Sigmoid colon (tissue), 7 donors: ENCODE measurements at regions of chr1 and their contacts with region 1.

Region 1: GRCh38 chr1:229117664-229118300 is 153.1 kb upstream of the RAB4A start:
- DNase-seq: peak; percentile 94
- H3K4me3 ChIP-seq: no peak overlapping the region
- H3K27ac ChIP-seq: peak overlapping the region; percentile 78 to 86 (median 83)
- H3K4me1 ChIP-seq: peaks cover 0 to 79% (median 44%) of the 10 kb centered on the region in 4 donors
- H3K27me3 ChIP-seq: no peaks in the 10 kb centered on the region
- CTCF ChIP-seq: no peak
- EP300 ChIP-seq: peak in 2 of 4 donors; percentile 60 to 70
- POLR2A ChIP-seq: no peak

Region 2: DNA sequence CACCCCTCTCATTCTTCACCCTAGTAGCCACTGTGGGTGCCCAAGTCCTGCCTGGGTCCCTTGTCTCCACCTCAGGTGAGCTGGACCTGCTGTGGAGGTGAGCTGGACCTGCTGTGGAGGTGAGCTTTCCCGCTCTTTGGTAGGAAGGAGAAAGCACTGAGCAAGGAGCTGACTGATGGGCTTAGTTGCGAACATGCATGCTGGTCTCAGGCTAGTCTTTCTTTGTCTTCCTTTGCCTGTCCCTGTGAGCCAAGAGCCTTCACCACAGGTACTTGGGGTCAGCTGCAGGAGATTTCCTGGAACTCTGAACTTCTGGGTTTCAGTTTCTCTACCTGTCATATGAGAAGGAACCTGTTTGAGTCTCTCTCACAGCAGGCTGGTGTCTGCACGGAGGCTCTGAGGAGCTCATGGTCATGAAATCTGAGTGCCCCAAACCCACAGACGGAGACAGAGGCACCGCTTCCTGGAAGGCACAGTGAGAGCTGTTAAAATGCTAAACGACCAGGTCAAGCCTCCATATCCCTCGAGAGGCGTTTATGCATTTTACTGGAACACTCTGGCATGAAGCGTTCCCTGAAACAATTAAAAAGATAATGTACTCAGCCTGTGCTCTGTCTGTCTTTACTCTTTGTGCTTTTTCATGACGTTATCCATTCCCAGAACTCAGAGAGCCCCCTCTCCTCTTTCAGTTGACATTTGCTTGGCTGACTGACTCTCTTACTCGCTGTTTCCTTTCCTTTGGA is 312.9 kb before region 1 on chr1:
- intact Hi-C with region 1: loop called (anchors 2 kb)
- DNase-seq: no peak
- H3K4me3 ChIP-seq: no peak overlapping the region
- H3K27ac ChIP-seq: peak overlapping the region in 3 of 4 donors; percentile 15 to 83 (median 47)
- H3K4me1 ChIP-seq: peaks cover 0 to 54% (median 45%) of the 10 kb centered on the region in 4 donors
- H3K27me3 ChIP-seq: no peaks in the 10 kb centered on the region
- CTCF ChIP-seq: no peak
- EP300 ChIP-seq: peak in 2 of 4 donors; percentile 73 to 82
- POLR2A ChIP-seq: no peak

Region 3: DNA sequence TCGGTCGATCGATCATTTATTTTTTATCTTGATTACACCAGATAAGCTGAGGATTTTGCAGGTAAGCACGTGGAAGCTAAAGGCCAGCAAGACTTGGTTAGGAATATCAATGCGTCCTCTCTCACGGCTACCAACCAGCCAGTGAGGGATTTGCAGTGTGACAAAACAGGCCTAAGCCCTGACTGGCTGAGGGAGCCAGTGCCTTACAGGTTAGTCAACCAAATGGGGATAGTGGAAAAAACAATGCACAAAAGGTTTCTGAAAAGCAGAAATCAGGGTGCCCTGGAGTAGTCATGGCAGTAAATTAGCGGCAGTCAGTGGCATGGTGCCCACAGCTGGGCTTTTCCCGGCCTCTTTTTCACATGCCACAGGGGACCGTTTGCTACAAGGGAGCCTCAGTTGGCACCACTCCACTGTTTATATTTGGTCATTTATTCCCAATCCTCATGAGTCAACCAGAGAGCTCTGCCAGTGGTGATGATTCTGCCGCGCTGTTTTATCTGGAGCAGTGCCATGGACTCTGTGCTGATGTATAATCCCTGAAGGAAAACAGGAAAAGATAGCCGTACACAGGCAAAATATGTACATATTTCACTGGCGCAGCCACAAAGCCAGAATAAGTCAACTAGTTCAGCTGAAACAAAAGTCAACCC is 214.9 kb before region 1 on chr1:
- intact Hi-C with region 1: loop called (anchors 5 kb)
- DNase-seq: peak; percentile 95
- H3K4me3 ChIP-seq: no peak overlapping the region
- H3K27ac ChIP-seq: peak overlapping the region; percentile 42 to 81 (median 69)
- H3K4me1 ChIP-seq: peaks cover 0 to 46% (median 43%) of the 10 kb centered on the region in 4 donors
- H3K27me3 ChIP-seq: no peaks in the 10 kb centered on the region
- CTCF ChIP-seq: no peak
- EP300 ChIP-seq: no peak
- POLR2A ChIP-seq: no peak

Region 4: GRCh38 chr1:228989992-228990827 is 127.6 kb before region 1 on chr1:
- intact Hi-C with region 1: loop called (anchors 5 kb)
- DNase-seq: peak; percentile 93
- H3K4me3 ChIP-seq: no peak overlapping the region
- H3K27ac ChIP-seq: peak overlapping the region; percentile 15 to 82 (median 70)
- H3K4me1 ChIP-seq: peaks cover 0 to 53% (median 44%) of the 10 kb centered on the region in 4 donors
- H3K27me3 ChIP-seq: no peaks in the 10 kb centered on the region
- CTCF ChIP-seq: no peak
- EP300 ChIP-seq: peak in 3 of 4 donors; percentile 31 to 78 (median 40)
- POLR2A ChIP-seq: no peak

Region 5: DNA sequence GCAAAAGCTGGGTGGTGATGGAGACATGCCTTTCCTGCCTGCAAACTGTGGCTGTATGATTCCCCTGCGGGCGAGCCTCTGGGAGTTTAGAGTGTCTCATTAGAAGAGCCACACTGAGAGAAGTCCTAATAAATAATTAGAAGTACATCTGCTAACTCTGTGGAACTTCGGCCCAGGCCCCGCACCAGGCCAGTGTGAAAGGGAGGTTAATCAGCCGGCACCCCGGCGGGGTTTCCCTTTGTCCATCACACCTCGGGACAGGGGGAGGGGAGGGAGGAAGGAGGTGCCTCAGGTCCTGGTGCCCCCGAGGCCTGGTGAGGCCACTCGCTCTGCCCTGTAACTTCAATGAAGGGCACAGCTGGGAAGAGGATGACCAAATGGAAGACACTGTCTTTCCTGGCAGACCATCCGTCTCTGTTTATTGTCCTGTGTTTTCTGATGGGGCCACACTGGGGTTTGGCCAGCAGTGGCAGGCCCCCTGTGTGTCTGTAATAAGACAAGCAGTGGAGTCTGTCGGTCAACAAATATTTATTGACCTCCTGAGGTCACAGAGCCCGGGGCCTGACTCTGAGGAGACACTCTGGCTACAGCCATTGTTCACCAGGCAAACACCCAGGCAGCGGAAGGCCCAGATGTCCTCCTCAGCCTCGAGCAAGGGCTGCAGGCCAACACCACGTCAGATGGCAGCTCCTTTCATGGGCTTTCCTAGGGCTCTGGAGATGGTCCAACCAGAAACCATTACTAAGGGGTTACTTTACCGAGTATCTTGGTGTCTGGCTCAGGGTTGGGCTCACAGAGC is 114.3 kb before region 1 on chr1:
- intact Hi-C with region 1: loop called (anchors 5 kb)
- DNase-seq: peak; percentile 92
- H3K4me3 ChIP-seq: no peak overlapping the region
- H3K27ac ChIP-seq: peak overlapping the region in 3 of 4 donors; percentile 57 to 70 (median 61)
- H3K4me1 ChIP-seq: peaks cover 0 to 16% (median 10%) of the 10 kb centered on the region in 4 donors
- H3K27me3 ChIP-seq: no peaks in the 10 kb centered on the region
- CTCF ChIP-seq: no peak
- EP300 ChIP-seq: no peak
- POLR2A ChIP-seq: no peak

Region 6: GRCh38 chr1:229070168-229070567 is 47.6 kb before region 1 on chr1:
- intact Hi-C with region 1: loop called (anchors 1 kb)
- DNase-seq: peak; percentile 98
- H3K4me3 ChIP-seq: no peak overlapping the region
- H3K27ac ChIP-seq: peak overlapping the region; percentile 15 to 75 (median 65)
- H3K4me1 ChIP-seq: peaks cover 0 to 22% (median 17%) of the 10 kb centered on the region in 4 donors
- H3K27me3 ChIP-seq: no peaks in the 10 kb centered on the region
- CTCF ChIP-seq: no peak
- EP300 ChIP-seq: peak; percentile 36 to 88 (median 76)
- POLR2A ChIP-seq: no peak

Region 7: DNA sequence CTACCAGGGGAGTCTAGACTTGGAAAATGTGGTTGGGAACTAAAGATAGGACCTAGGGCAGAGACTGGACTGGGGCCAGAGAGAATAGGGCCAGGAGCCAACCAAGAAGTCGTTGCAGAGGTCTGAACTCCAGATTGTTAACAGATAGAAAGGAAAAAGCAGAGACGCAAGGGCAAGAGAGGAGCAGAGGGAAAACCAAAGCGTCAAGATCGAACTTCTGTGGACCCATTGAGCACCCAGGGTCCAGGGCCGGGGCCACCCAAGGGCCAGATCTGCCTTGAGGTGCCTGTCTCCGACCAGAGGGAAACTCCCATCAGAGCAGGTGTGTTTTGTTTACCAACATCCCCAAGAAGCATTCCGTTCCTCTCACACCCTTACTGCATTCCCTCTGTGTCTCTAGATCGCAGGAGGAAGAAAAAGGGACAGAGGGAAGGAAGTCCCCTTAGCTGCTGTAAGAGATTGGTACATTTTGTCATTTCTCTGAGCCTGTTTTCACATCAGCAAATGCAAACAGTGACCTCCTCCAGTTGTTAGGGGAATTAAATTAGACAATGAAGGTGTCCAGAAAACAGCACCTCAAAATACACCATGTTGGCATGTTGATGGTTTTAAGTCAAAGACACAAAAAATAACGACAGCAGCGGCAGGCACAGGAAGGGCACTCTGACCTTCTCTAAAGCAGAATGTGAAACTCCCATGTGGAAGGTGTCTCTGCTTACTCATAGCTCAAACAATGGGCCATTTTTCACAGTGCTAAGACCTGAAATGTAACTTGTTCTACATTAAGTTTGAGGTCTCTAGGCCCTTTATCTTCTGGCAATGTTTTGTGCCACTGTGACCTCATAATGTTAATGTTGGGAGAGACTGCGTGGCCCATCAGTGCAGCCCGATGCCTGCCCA is 47.3 kb after region 1 on chr1:
- intact Hi-C with region 1: no loop called
- DNase-seq: no peak
- H3K4me3 ChIP-seq: no peak overlapping the region
- H3K27ac ChIP-seq: no peak overlapping the region
- H3K4me1 ChIP-seq: peaks cover 0 to 19% (median 5%) of the 10 kb centered on the region in 4 donors
- H3K27me3 ChIP-seq: no peaks in the 10 kb centered on the region
- CTCF ChIP-seq: no peak
- EP300 ChIP-seq: no peak
- POLR2A ChIP-seq: no peak